Dorsolateral prefrontal cortex (tissue), 120 donors: ENCODE measurements at regions of chr18 and their contacts with region 1.

Region 1: DNA sequence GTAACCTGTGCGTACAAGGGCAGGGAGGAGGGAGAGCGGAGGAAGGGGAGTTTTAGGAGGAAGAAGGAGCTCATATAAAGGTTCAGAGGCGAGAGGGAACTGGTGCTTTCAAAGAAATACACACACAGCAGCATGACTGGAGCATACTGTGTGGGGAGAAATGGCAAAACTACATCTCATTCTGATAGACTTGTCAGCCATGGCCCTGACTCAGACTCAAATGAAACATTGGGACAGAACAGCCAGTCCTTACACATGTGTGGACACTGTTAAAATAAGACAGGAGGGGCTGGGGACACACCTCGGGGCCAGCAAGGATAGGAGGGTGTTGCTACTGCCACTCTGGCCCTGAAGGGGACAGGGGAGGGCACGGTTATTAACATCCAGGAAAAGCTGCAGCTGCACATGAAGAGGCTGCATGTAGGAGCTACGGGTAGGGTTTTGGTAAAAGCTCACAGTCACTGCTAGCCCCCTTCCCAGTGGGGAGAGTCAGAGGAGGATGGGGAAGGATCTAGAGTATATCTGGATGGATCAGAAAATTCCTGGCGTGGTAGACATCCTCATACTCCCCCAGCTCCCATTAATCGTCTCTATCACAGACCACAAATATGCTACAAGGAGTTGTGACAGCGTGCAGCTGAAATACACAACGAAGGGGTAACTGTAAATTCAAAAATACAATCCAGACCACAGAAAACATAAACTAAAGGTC is 110.5 kb downstream of the GATA6 start:
- DNase-seq: no peak
- H3K4me3 ChIP-seq: no peak overlapping the region
- H3K27ac ChIP-seq: no peak overlapping the region
- H3K27me3 ChIP-seq: peaks cover 0 to 14% (median 0%) of the 10 kb centered on the region in 45 donors
- CTCF ChIP-seq: no peak

Region 2: DNA sequence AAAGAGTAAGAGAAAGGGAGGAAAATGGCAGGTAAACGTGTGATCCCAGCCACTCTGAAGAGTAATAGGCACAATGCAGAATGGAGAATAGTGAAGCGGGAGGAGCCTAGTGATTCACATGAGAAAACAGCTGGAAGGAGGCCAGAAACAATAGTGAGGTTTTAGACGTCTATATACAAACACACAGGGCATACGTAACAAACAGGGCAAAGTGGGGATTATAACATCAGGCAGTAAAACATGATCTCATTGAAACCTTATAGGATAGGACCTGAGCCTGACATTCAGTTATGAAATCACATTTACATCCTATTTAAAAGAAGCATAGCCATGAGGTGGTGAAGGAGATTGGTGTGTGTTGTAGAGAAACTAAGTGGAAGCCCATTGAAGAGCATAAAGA is 143.5 kb before region 1 on chr18:
- intact Hi-C with region 1: no loop called
- DNase-seq: no peak
- H3K4me3 ChIP-seq: no peak overlapping the region
- H3K27ac ChIP-seq: no peak overlapping the region
- H3K27me3 ChIP-seq: peaks cover 0 to 6% (median 0%) of the 10 kb centered on the region in 45 donors
- CTCF ChIP-seq: no peak

Region 3: GRCh38 chr18:22314420-22314819 is 34.5 kb after region 1 on chr18:
- intact Hi-C with region 1: no loop called
- DNase-seq: no peak
- H3K4me3 ChIP-seq: no peak overlapping the region
- H3K27ac ChIP-seq: no peak overlapping the region
- H3K27me3 ChIP-seq: peaks cover 0 to 61% (median 12%) of the 10 kb centered on the region in 45 donors
- CTCF ChIP-seq: no peak

Region 4: GRCh38 chr18:22324191-22325131 is 44.6 kb after region 1 on chr18:
- intact Hi-C with region 1: loop called in 1 of 2 experiments (anchors 10 kb)
- DNase-seq: no peak
- H3K4me3 ChIP-seq: peak overlapping the region in 34 of 59 donors; percentile 1 to 54 (median 28)
- H3K27ac ChIP-seq: no peak overlapping the region
- H3K27me3 ChIP-seq: peaks cover 0 to 22% (median 0%) of the 10 kb centered on the region in 45 donors
- CTCF ChIP-seq: peak in 1 of 56 donors; percentile 3

Region 5: GRCh38 chr18:22591222-22591621 is 311.3 kb after region 1 on chr18:
- intact Hi-C with region 1: no loop called
- DNase-seq: no peak
- H3K4me3 ChIP-seq: no peak overlapping the region
- H3K27ac ChIP-seq: no peak overlapping the region
- H3K27me3 ChIP-seq: no peaks in the 10 kb centered on the region
- CTCF ChIP-seq: no peak